Panc1 (cell line): ENCODE measurements at regions of chr4 and their contacts with region 1.

Region 1: GRCh38 chr4:56940971-56941370 is 33.3 kb downstream of the REST start:
- DNase-seq: no peak
- ATAC-seq: no peak
- H3K4me3 ChIP-seq: no peak overlapping the region
- H3K27ac ChIP-seq: no peak overlapping the region
- H3K4me1 ChIP-seq: no peaks in the 10 kb centered on the region
- H3K27me3 ChIP-seq: no peaks in the 10 kb centered on the region
- CTCF ChIP-seq: no peak

Region 2: DNA sequence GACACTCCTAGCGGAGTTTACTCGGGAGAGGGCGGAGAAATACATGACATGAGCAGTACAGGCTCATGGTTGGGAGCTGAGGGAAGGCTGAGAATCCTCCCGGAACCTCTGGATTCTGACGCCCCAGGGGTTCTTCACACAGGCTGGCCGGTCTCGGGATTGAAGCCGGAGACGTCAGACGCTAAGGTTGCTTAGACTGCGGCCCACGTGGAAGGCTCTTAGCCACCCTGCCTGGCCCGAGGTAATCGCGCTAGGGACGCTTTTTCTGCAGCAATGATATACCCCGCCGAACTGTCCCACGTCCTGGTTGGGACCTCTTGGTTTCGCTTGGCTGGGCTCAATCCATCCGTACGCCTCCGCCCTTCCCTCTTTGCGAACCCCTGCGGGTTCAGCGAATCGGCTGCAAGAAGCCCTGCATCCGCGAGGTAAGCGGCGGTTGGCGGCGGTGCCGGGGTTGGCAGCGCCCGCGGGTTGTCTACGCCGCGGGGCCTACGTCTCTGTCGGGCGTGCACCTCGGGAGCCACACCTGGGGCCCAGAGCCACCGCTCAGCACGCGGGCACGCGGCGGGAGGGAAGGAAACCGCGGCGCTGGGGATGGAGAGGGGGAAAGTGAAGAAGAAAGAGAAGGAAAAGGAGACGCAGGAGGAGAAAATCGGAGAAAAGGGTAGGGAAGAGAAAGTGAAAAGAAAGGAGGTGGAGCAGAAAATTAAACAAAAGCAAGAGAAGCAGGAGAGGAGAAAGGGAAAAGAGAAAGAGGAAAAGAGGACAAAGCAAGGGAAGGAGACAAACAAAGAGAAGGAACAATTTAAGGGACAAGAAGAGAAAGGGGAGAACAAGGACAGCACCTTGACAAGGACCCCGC is 435.5 kb before region 1 on chr4 and contains the start of gene ARL9:
- CTCF ChIA-PET with region 1: no interaction called
- POLR2A ChIA-PET with region 1: interaction called, 12 read pairs
- in situ Hi-C with region 1: no loop called
- intact Hi-C with region 1: no loop called
- DNase-seq: no peak
- ATAC-seq: peak; percentile 90
- H3K4me3 ChIP-seq: peak within 1 kb of the TSS; percentile 46 to 61
- H3K27ac ChIP-seq: peak within 1 kb of the TSS; percentile 63
- H3K4me1 ChIP-seq: no peaks in the 10 kb centered on the region
- H3K27me3 ChIP-seq: no peaks in the 10 kb centered on the region
- CTCF ChIP-seq: no peak
- total RNA-seq, gene ARL9: 0.41 TPM

Region 3: DNA sequence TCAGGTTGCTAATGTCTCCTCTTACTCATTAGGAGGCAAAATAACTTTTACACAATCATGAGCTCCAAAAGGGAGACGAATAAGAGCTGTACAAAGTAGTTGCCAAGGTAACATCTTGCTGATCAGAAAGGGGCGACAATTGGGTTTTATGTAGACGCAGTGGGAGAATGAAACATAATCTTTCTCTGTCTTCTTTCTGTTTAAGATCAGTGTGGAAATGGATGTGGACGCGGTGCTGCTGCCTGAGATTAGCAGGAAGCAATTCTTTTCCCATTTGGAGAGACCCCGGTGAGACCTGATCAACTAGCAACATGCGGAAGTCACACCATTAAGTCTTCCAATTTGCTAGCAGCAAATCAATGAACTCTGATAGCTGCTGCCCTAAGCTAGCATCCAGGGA is 260.0 kb after region 1 on chr4:
- CTCF ChIA-PET with region 1: no interaction called
- POLR2A ChIA-PET with region 1: no interaction called
- in situ Hi-C with region 1: no loop called
- intact Hi-C with region 1: no loop called
- DNase-seq: no peak
- ATAC-seq: no peak
- H3K4me3 ChIP-seq: no peak overlapping the region
- H3K27ac ChIP-seq: no peak overlapping the region
- H3K4me1 ChIP-seq: no peaks in the 10 kb centered on the region
- H3K27me3 ChIP-seq: no peaks in the 10 kb centered on the region
- CTCF ChIP-seq: no peak